ENCODE measurements at regions of chr4 and their contacts with region 1.

Region 1: GRCh38 chr4:152535903-152536544 is at the start of gene FBXW7:
- DNase-seq: peak; percentile 98 to 100 (median 100)

Region 2: GRCh38 chr4:152779513-152780266 is 243.7 kb after region 1 on chr4 and contains the starts of genes ARFIP1 and TIGD4:
- intact Hi-C with region 1: loop called (anchors 5 kb)
- DNase-seq: peak; percentile 98 to 100 (median 99)